Stomach (tissue), 19 donors: ENCODE measurements at regions of chr10 and their contacts with region 1.

Region 1: GRCh38 chr10:30534465-30535144 is 94.9 kb downstream of the LYZL2 start:
- DNase-seq: peak; percentile 79 to 90
- H3K4me3 ChIP-seq: no peak overlapping the region
- H3K27ac ChIP-seq: no peak overlapping the region
- H3K4me1 ChIP-seq: peaks cover 0 to 20% (median 0%) of the 10 kb centered on the region in 4 donors
- H3K27me3 ChIP-seq: no peaks in the 10 kb centered on the region
- CTCF ChIP-seq: peak in 5 of 7 experiments; percentile 85 to 95 (median 90)
- EP300 ChIP-seq: no peak
- POLR2A ChIP-seq: no peak

Region 2: GRCh38 chr10:30392564-30392990 is 142.0 kb before region 1 on chr10:
- intact Hi-C with region 1: loop called (anchors 5 kb)
- DNase-seq: peak; percentile 77 to 91
- H3K4me3 ChIP-seq: no peak overlapping the region
- H3K27ac ChIP-seq: no peak overlapping the region
- H3K4me1 ChIP-seq: peaks cover 0 to 8% (median 6%) of the 10 kb centered on the region in 4 donors
- H3K27me3 ChIP-seq: peaks cover 0 to 11% (median 5%) of the 10 kb centered on the region in 3 donors
- CTCF ChIP-seq: peak in 5 of 7 experiments; percentile 85 to 96 (median 88)
- EP300 ChIP-seq: no peak
- POLR2A ChIP-seq: no peak

Region 3: DNA sequence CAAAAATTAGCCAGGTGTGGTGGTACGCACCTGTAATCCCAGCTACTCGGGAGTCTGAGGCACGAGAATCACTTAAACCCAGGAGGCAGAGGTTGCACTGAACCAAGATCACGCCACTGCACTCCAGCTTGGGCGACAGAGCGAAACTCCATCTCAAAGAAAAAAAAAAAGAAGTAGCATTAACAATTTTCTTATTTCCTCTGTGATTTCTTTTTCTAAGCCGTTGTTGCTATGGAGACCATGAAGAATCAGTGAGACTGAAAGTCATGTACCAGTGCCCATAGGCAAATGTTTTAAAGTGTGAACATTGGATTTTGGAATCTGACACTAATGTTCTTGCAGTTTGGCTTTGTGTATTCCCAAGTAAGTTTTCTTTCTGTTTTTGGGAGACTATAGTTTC is 119.0 kb before region 1 on chr10:
- intact Hi-C with region 1: loop called (anchors 5 kb)
- DNase-seq: no peak
- H3K4me3 ChIP-seq: no peak overlapping the region
- H3K27ac ChIP-seq: no peak overlapping the region
- H3K4me1 ChIP-seq: peaks cover 0 to 21% (median 5%) of the 10 kb centered on the region in 4 donors
- H3K27me3 ChIP-seq: no peaks in the 10 kb centered on the region
- CTCF ChIP-seq: no peak
- EP300 ChIP-seq: no peak
- POLR2A ChIP-seq: no peak

Region 4: GRCh38 chr10:30736685-30737232 is 202.2 kb after region 1 on chr10:
- intact Hi-C with region 1: no loop called
- DNase-seq: peak; percentile 32 to 62
- H3K4me3 ChIP-seq: no peak overlapping the region
- H3K27ac ChIP-seq: peak overlapping the region in 2 of 5 donors; percentile 54 to 66
- H3K4me1 ChIP-seq: peaks cover 0 to 9% (median 3%) of the 10 kb centered on the region in 4 donors
- H3K27me3 ChIP-seq: peaks cover 0 to 3% (median 0%) of the 10 kb centered on the region in 3 donors
- CTCF ChIP-seq: no peak
- EP300 ChIP-seq: no peak
- POLR2A ChIP-seq: no peak